A549 (cell line): ENCODE measurements at regions of chr5 and their contacts with region 1.

Region 1: GRCh38 chr5:170183816-170184687 is 48.7 kb upstream of the C5orf58 start:
- DNase-seq: peak; percentile 62 to 66
- ATAC-seq: peak; percentile 95 to 99
- H3K4me3 ChIP-seq: no peak overlapping the region
- H3K27ac ChIP-seq: peak overlapping the region in 1 of 2 experiments; percentile 32; a peak in 2 of 6 replicates
- H3K4me1 ChIP-seq: no peaks in the 10 kb centered on the region; the same call in 2 of the 3 replicates
- CTCF ChIP-seq: peak; percentile 79
- EP300 ChIP-seq: no peak
- POLR2A ChIP-seq: no peak
- RAD21 ChIP-seq: peak; percentile 95 to 98

Region 2: DNA sequence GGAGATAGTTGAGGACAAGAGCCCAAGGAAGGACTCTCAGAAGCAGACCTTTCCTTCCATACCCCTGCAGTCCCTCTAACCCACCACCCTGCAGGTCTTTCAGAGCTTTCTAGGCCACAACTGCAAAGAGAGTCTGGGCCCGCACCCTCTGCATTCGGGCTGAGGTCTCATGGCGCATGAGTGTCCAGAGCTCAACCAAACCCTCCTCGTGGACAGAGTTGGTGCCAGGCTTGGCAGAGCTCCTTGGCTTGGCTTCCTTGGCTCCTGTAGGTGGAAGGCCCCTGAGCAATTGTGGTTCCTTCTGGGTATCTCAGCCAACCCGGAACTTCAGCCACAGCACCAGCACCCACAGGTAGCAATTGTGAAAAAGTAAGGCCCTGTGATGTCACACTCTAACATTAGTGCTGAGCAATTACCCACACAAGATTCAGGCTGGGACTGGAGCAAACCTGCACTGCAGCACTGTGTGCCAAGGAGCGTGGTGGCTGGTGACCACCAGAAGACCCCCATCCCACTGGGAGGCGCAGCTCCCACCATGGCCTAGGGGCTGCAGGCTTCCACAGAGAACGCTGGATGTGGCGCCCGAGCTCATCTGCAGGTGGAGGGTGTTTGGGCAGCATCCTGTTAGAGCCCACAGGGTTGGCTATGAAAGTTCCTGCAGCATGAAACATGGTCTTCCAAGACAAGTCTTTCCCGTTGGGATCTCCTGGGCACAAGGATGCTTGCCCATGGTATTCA is 39.6 kb before region 1 on chr5:
- CTCF ChIA-PET with region 1: interaction called, 13 read pairs
- POLR2A ChIA-PET with region 1: no interaction called
- DNase-seq: no peak
- ATAC-seq: no peak
- H3K4me3 ChIP-seq: no peak overlapping the region
- H3K27ac ChIP-seq: no peak overlapping the region; a peak in 1 of 6 replicates
- H3K4me1 ChIP-seq: 0 out of 3 replicates have a peak, but pooled peaks cover 5% of the 10 kb centered on the region
- CTCF ChIP-seq: no peak
- EP300 ChIP-seq: no peak
- POLR2A ChIP-seq: no peak
- RAD21 ChIP-seq: no peak

Region 3: DNA sequence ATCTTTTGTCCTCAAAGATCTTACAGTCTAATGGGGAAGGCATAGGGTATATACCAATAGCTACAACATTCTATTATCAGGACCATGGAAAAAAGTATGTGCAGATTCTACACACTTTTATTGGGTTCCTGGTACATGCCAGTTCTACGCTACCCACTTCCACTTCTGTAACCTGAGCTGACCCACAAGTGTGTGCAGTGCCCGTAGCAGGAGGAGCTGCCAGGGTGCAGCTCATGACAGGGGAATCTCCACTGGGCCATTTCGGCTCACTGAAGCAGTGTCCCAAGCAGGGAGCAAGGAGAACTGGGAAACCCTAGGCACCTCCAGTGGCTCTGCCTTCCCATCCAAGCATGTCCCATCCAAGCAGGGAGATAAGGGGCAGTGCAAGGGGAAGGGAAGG is 18.0 kb before region 1 on chr5:
- CTCF ChIA-PET with region 1: interaction called, 56 read pairs
- POLR2A ChIA-PET with region 1: no interaction called
- DNase-seq: no peak
- ATAC-seq: no peak
- H3K4me3 ChIP-seq: no peak overlapping the region
- H3K27ac ChIP-seq: no peak overlapping the region
- H3K4me1 ChIP-seq: no peaks in the 10 kb centered on the region
- CTCF ChIP-seq: no peak
- EP300 ChIP-seq: no peak
- POLR2A ChIP-seq: no peak
- RAD21 ChIP-seq: no peak

Region 4: DNA sequence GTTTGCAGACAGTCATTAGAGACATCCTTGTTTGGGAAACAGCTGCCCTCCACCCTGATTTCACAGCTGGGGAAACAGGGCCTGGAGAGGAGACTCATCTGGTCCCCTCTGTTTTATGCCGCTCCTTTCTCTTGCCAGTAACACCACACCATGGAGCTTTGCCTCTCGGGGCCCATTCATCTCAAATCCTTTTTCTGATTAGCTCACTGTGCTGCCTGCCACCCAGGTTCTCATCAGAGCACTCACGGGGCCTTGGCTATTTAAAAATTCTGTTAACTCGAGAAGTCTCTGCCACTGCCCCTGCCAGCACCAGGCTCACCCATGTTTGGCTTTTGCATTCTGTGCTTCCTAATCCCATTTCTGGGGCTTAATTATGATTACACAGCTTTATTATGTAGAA is 11.9 kb after region 1 on chr5:
- CTCF ChIA-PET with region 1: interaction called, 92 read pairs
- POLR2A ChIA-PET with region 1: no interaction called
- DNase-seq: no peak
- ATAC-seq: no peak
- H3K4me3 ChIP-seq: no peak overlapping the region
- H3K27ac ChIP-seq: no peak overlapping the region
- H3K4me1 ChIP-seq: no peaks in the 10 kb centered on the region
- CTCF ChIP-seq: no peak
- EP300 ChIP-seq: no peak
- POLR2A ChIP-seq: no peak
- RAD21 ChIP-seq: no peak

Region 5: GRCh38 chr5:170253844-170254455 is 69.9 kb after region 1 on chr5:
- CTCF ChIA-PET with region 1: no interaction called
- POLR2A ChIA-PET with region 1: no interaction called
- DNase-seq: no peak
- ATAC-seq: no peak
- H3K4me3 ChIP-seq: no peak overlapping the region
- H3K27ac ChIP-seq: no peak overlapping the region
- H3K4me1 ChIP-seq: no peaks in the 10 kb centered on the region
- CTCF ChIP-seq: no peak
- EP300 ChIP-seq: no peak
- POLR2A ChIP-seq: no peak
- RAD21 ChIP-seq: no peak

Region 6: DNA sequence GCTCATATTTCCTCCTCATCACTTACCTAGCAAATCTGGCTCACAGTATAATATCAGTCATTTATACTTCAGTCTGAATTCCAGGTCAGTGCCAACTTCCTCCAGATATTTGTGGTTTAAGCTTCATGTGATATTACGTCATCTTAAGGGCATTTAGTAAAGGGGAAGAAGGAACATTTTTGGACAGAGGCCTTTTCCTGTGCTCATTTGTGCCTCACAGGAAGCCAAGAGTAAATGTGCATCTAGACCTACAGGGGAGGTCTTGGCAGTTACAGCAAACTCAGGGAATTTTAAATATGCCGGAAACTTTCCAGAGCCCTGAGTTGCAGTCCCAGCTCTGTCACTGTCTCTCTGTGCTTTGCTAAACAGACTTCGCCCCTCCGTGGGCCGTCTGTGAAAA is 307.4 kb after region 1 on chr5:
- CTCF ChIA-PET with region 1: no interaction called
- POLR2A ChIA-PET with region 1: no interaction called
- DNase-seq: no peak
- ATAC-seq: no peak; a peak in 1 of 6 replicates
- H3K4me3 ChIP-seq: no peak overlapping the region
- H3K27ac ChIP-seq: peak overlapping the region; percentile 33 to 58; a peak in 3 of 6 replicates
- H3K4me1 ChIP-seq: peaks cover 9% of the 10 kb centered on the region; the same call in 2 of the 3 replicates
- CTCF ChIP-seq: no peak
- EP300 ChIP-seq: no peak
- POLR2A ChIP-seq: no peak
- RAD21 ChIP-seq: no peak